ENCODE measurements at regions of chr12 and their contacts with region 1.

Region 1: GRCh38 chr12:68901551-68901950 is 31.4 kb downstream of the CPM start:
- DNase-seq: no peak
- CTCF ChIP-seq: no peak

Region 2: GRCh38 chr12:68912916-68913315 is 11.4 kb after region 1 on chr12:
- CTCF ChIA-PET with region 1: interaction called, 10 read pairs
- POLR2A ChIA-PET with region 1: no interaction called
- DNase-seq: no peak
- CTCF ChIP-seq: no peak

Region 3: GRCh38 chr12:69007101-69007854 is 105.7 kb after region 1 on chr12:
- CTCF ChIA-PET with region 1: no interaction called
- POLR2A ChIA-PET with region 1: no interaction called
- DNase-seq: no peak
- CTCF ChIP-seq: no peak

Measured in GM10248 (cell line).